GM12878 (cell line): ENCODE measurements at regions of chr19 and their contacts with region 1.

Region 1: GRCh38 chr19:51422053-51422448 is 4.6 kb upstream of the SIGLEC10 start:
- DNase-seq: no peak
- ATAC-seq: peak; percentile 64
- H3K4me3 ChIP-seq: no peak overlapping the region
- H3K27ac ChIP-seq: no peak overlapping the region
- H3K4me1 ChIP-seq: peaks cover 6% of the 10 kb centered on the region
- H3K27me3 ChIP-seq: no peaks in the 10 kb centered on the region; a peak in 1 of 4 replicates
- CTCF ChIP-seq: peak; percentile 99 to 100 (median 99)
- EP300 ChIP-seq: no peak
- POLR2A ChIP-seq: no peak
- RAD21 ChIP-seq: peak; percentile 89

Region 2: GRCh38 chr19:51166846-51167490 is 255.1 kb before region 1 on chr19:
- CTCF ChIA-PET with region 1: no interaction called
- POLR2A ChIA-PET with region 1: no interaction called
- RAD21 ChIA-PET with region 1: no interaction called
- SMC1A ChIA-PET with region 1: no interaction called
- in situ Hi-C with region 1: no loop called
- intact Hi-C with region 1: no loop called
- DNase-seq: no peak
- ATAC-seq: peak; percentile 94
- H3K4me3 ChIP-seq: no peak overlapping the region
- H3K27ac ChIP-seq: no peak overlapping the region
- H3K4me1 ChIP-seq: peaks cover 16% of the 10 kb centered on the region
- H3K27me3 ChIP-seq: peaks cover 0 to 2% of the 10 kb centered on the region in 2 experiments; a peak in 1 of 4 replicates
- CTCF ChIP-seq: no peak
- EP300 ChIP-seq: no peak
- POLR2A ChIP-seq: no peak
- RAD21 ChIP-seq: no peak

Region 3: GRCh38 chr19:51367565-51368365 is 54.3 kb before region 1 on chr19:
- CTCF ChIA-PET with region 1: interaction called, 6 read pairs
- POLR2A ChIA-PET with region 1: interaction called, 10 read pairs
- RAD21 ChIA-PET with region 1: interaction called, 15 read pairs
- SMC1A ChIA-PET with region 1: interaction called, 7 read pairs
- in situ Hi-C with region 1: no loop called
- intact Hi-C with region 1: no loop called
- DNase-seq: peak; percentile 96
- ATAC-seq: peak; percentile 88
- H3K4me3 ChIP-seq: peak overlapping the region; percentile 82
- H3K27ac ChIP-seq: peak overlapping the region; percentile 56
- H3K4me1 ChIP-seq: peaks cover 24% of the 10 kb centered on the region
- H3K27me3 ChIP-seq: no peaks in the 10 kb centered on the region
- CTCF ChIP-seq: no peak
- EP300 ChIP-seq: no peak
- POLR2A ChIP-seq: peak; percentile 87
- RAD21 ChIP-seq: no peak

Region 4: DNA sequence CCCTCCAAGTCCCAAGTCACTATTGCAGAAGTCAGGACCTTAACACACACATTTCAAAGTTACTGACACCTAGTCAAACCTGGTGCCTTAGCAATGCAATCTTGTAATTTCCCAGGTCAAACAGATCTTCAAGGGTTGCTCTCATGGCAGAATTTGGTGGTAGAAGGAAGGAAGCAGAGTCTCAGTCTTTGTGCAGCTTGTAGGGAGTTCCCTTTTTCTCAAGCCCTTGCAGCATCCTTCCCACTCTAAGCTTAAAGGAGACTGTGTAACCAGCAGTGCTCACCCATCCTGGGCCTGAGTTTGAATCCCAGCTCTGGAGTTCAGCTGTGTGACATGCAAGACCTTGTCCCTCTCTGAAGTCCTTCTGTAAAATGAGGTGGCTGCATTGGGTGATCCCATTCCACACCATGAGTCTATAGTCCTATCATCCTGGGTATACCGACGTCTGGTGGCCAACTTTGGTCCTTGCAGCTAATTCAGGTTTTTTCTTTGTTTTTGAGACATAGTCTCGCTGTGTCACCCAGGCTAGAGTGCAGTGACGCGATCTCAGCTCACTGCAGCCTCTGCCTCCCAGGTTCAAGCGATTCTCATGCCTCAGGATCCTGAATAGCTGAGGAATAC is 14.4 kb before region 1 on chr19:
- CTCF ChIA-PET with region 1: interaction called, 38 read pairs
- POLR2A ChIA-PET with region 1: interaction called, 4 read pairs
- RAD21 ChIA-PET with region 1: interaction called, 18 read pairs
- SMC1A ChIA-PET with region 1: interaction called, 14 read pairs
- in situ Hi-C with region 1: no loop called
- intact Hi-C with region 1: no loop called
- DNase-seq: no peak
- ATAC-seq: peak; percentile 89
- H3K4me3 ChIP-seq: no peak overlapping the region
- H3K27ac ChIP-seq: no peak overlapping the region
- H3K4me1 ChIP-seq: peaks cover 14% of the 10 kb centered on the region
- H3K27me3 ChIP-seq: no peaks in the 10 kb centered on the region
- CTCF ChIP-seq: peak; percentile 63 to 79 (median 71)
- EP300 ChIP-seq: no peak
- POLR2A ChIP-seq: no peak
- RAD21 ChIP-seq: peak; percentile 66

Region 5: DNA sequence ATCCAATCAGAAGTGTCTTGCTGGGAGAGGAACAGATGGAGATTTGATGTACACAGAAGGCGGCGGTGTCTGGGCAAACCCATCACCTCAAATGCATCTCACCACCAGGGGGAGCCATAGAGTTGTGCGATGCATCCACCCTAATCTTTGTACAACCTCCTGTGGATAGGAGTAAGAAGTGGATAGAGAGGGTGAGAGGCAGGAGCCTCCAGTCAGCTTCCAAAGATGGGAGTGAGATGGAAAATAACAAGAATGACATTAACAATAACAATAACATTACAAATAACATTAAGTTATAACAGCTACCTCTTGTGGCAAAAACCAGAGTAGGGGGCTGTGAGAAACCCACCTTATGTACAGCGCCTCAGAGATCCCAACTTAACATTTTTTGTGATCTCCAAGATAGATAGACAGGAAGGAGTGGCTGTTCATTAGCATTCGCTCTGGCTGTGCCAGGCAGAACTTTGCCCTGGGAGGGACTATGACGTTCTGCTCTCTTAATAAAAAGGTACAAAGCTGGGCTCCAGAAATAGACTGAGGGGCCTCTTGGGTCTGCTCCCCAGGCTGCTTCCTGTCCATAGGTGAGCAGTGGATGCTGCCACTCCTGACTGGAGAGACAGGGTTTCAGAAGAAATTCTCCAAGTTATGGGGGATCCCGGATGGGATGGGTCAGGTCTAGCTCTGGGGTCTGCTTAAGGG is 51.1 kb after region 1 on chr19:
- CTCF ChIA-PET with region 1: interaction called, 10 read pairs
- POLR2A ChIA-PET with region 1: no interaction called
- RAD21 ChIA-PET with region 1: no interaction called
- SMC1A ChIA-PET with region 1: interaction called, 9 read pairs
- in situ Hi-C with region 1: no loop called
- intact Hi-C with region 1: no loop called
- DNase-seq: peak; percentile 15
- ATAC-seq: peak; percentile 91
- H3K4me3 ChIP-seq: no peak overlapping the region
- H3K27ac ChIP-seq: no peak overlapping the region
- H3K4me1 ChIP-seq: no peaks in the 10 kb centered on the region
- H3K27me3 ChIP-seq: no peaks in the 10 kb centered on the region; a peak in 1 of 4 replicates
- CTCF ChIP-seq: peak; percentile 65 to 93 (median 86)
- EP300 ChIP-seq: no peak
- POLR2A ChIP-seq: no peak
- RAD21 ChIP-seq: peak; percentile 92